Prostate gland (tissue), 2 donors: ENCODE measurements at regions of chr19 and their contacts with region 1.

Region 1: GRCh38 chr19:12610540-12611360 is at the starts of genes ZNF490 and ZNF791:
- DNase-seq: peak; percentile 99
- H3K4me3 ChIP-seq: peak within 1 kb of the TSS; percentile 80 to 91
- H3K27ac ChIP-seq: peak within 1 kb of the TSS; percentile 96 to 98
- H3K4me1 ChIP-seq: no peaks in the 10 kb centered on the region
- H3K27me3 ChIP-seq: no peaks in the 10 kb centered on the region
- CTCF ChIP-seq: peak in 1 of 4 experiments; percentile 19
- POLR2A ChIP-seq: peak; percentile 84
- total RNA-seq, gene ZNF490: 7.2 to 8.9 TPM
- total RNA-seq, gene ZNF791: 18.3 to 20.4 TPM

Region 2: DNA sequence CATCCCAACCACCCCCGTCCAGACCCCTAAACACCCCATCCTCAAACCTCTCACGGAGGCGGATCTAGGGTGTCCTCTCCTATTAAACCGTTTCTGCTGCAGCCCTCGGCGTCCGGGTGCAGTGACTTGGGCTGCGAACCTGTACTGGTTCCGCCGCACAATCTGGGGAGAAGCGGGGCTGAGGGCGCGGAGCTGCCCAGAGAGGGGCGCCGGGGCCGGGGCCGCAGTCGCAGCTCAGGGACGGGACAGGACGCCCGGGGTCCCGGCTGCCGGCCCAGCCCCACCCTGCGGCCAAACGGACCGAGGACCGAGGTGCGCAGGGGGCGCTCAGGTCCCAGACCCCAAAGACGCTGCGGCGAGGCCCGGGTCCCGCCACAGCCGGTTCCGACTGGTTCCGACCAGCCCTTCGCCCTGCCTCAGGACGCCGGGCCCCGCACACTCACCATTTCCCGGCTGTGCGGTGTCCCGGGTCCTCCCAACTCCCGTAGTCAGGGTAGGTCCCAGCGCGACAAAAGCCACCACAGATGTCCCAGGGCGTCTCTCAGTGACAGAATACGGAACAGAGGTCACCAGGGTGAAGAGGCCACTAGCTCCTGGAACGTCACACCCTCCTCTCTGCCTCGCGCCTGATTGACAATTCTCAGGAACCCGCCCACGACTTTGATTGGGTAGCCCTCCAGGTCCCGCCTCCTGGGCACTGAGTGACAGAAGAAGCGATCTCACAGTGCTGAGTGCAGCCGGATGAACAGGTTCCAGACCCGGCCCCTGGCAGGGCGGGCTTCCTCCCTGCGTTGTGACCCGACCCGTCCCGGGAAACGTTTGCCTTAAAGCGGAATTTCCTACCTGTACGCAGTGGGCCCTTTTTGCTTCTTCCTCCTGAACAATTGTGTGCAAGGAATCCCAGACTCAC is 316.2 kb before region 1 on chr19 and contains the start of gene ZNF44:
- intact Hi-C with region 1: no loop called
- DNase-seq: peak; percentile 99
- H3K4me3 ChIP-seq: peak within 1 kb of the TSS; percentile 97 to 99
- H3K27ac ChIP-seq: peak within 1 kb of the TSS; percentile 84 to 94
- H3K4me1 ChIP-seq: no peaks in the 10 kb centered on the region
- H3K27me3 ChIP-seq: no peaks in the 10 kb centered on the region
- CTCF ChIP-seq: no peak
- POLR2A ChIP-seq: peak; percentile 86
- total RNA-seq, gene ZNF44: 10.3 to 16.2 TPM

Region 3: DNA sequence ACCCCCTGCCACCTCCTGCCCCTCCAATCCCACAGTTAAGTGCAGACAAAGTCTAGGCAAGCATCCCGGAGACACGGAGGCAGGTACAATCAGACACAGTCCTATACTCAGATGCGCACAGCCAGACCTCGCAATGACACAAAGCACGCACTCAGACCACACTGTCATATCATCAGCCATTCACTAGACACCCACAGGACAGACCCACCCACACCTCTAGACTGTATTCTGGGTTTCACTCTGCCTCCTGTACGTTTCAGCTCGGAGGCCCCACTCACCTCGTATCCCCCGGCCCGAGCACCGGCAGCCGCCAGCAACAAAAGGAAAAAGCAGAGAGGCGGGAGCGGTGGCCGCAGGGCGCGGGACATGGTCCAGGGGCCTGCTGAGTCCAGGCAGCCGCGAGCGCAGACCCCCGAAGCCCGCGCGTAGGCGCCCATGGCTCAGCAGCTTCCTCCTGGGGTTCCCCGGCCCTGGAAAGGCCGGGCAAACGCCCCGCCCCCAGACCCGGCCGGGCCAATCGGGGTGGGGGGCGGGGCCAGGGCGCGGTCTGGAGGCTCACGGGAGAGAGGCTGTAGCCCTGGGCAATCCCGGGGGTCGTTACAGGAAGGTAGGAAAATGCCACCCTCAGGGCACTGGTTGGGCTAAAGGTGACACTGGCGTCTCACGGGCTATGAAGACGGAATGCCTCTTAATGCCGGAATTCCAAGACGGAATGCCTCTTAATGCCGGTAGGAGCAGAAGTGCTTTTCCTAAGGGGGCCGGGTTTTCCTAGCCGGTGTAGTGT is 55.7 kb after region 1 on chr19 and contains the starts of genes MAN2B1 and WDR83:
- intact Hi-C with region 1: loop called (anchors 5 kb)
- DNase-seq: peak; percentile 55
- H3K4me3 ChIP-seq: peak within 1 kb of the TSS; percentile 86 to 87
- H3K27ac ChIP-seq: peak within 1 kb of the TSS; percentile 55 to 57
- H3K4me1 ChIP-seq: peaks cover 22% of the 10 kb centered on the region
- H3K27me3 ChIP-seq: no peaks in the 10 kb centered on the region
- CTCF ChIP-seq: no peak
- POLR2A ChIP-seq: no peak
- total RNA-seq, gene MAN2B1: 60.2 to 91.9 TPM
- total RNA-seq, gene WDR83: 14.9 to 16.2 TPM

Region 4: GRCh38 chr19:12696366-12697335 is 85.9 kb after region 1 on chr19 and contains the start of gene FBXW9:
- intact Hi-C with region 1: no loop called
- DNase-seq: peak; percentile 95
- H3K4me3 ChIP-seq: peak within 1 kb of the TSS; percentile 47 to 77
- H3K27ac ChIP-seq: peak within 1 kb of the TSS; percentile 77
- H3K4me1 ChIP-seq: peaks cover 9% of the 10 kb centered on the region
- H3K27me3 ChIP-seq: no peaks in the 10 kb centered on the region
- CTCF ChIP-seq: peak in 1 of 4 experiments; percentile 33
- POLR2A ChIP-seq: peak; percentile 34
- total RNA-seq, gene FBXW9: 9.1 to 16.9 TPM